Posterior vena cava (tissue), 2 donors: ENCODE measurements at regions of chr3 and their contacts with region 1.

Region 1: DNA sequence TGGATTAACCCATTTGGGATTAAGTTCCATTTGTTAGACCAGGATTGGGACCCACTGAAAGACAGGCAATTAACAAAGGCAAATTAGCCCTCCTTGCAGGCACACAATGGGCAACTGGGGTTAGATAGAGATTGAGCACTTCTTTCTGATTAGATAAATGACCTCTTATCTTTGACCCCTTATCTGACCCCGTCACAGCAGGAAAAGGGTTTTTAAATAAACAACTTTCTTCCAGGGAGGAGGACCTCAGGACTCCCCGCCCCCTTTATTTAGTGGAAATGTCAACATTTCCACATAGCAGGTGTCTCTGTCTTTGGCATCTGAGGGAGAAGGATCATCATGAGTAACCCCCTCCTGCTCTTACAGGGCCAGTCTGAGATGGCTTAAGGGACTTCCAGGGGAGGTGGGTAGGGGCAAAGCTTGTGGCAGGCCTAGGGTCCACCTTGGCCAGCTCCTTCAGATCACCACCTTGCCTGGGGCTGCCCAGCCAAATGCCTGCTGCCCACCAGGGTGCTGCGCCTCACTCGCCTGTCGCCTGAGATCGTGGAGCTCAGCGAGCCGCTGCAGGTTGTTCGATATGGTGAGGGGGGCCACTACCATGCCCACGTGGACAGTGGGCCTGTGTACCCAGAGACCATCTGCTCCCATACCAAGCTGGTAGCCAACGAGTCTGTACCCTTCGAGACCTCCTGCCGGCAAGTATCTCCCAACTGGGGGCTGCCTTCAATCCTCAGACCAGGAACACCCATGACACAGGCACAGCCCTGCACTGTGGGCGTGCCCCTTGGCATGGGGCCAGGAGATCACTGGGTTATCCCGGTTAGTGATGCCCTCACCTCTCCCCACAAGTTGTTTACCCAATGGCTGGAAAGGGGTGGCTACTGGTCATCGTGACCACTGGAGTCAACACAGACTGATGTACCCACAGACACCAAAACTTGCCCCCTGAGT is 2.6 kb upstream of the WDR6 start:
- DNase-seq: no peak

Region 2: DNA sequence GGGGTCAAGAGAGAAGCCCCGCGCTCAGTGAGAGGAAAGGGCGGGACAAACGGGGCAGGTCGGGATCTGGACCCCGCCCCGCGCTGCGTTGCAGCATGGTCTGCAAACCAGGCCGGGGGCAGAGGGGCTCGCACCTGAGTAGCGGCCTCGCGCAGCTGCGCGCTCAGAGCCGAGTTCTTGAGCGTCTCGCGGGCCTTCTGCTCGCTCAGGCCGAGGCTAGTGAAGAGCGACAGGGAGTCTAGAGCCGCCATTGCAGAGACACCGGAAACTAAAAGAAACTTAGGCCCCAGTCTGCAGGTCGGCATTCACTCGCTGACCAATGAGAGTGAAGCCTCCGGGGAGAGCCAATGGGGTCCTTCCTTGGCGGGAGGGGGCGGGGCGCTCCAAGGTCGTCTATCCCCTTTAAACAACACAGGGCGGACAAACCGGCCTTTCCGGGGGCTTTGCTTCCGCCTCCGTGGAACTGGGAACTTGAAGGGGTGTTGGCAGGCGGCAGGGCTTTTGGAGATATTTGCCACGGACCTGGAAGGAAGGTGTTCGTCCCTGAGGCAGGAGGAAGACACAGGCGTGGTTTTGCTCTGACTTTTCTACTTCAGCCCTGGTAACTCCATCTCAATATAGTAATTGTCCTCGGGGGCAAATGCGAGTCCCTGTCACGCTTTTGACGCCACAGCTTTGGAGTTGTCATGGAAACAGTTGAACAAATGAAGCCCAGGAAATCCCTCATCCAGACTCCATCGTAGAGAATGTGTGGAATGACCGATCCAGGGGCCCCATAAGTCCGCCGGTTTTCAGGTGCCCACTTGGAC is 100.1 kb after region 1 on chr3 and contains the start of gene QARS1:
- intact Hi-C with region 1: loop called in 1 of 2 experiments (anchors 5 kb)
- DNase-seq: peak; percentile 97
- total RNA-seq, gene QARS1: 99.2 to 137 TPM

Region 3: GRCh38 chr3:49759226-49759625 is 754.6 kb after region 1 on chr3:
- intact Hi-C with region 1: no loop called
- DNase-seq: no peak